Activated CD8-positive, alpha-beta T cell treated with anti-CD3 and anti-CD28 coated beads for 36 hours (primary cell): ENCODE measurements at regions of chr7 and their contacts with region 1.

Region 1: DNA sequence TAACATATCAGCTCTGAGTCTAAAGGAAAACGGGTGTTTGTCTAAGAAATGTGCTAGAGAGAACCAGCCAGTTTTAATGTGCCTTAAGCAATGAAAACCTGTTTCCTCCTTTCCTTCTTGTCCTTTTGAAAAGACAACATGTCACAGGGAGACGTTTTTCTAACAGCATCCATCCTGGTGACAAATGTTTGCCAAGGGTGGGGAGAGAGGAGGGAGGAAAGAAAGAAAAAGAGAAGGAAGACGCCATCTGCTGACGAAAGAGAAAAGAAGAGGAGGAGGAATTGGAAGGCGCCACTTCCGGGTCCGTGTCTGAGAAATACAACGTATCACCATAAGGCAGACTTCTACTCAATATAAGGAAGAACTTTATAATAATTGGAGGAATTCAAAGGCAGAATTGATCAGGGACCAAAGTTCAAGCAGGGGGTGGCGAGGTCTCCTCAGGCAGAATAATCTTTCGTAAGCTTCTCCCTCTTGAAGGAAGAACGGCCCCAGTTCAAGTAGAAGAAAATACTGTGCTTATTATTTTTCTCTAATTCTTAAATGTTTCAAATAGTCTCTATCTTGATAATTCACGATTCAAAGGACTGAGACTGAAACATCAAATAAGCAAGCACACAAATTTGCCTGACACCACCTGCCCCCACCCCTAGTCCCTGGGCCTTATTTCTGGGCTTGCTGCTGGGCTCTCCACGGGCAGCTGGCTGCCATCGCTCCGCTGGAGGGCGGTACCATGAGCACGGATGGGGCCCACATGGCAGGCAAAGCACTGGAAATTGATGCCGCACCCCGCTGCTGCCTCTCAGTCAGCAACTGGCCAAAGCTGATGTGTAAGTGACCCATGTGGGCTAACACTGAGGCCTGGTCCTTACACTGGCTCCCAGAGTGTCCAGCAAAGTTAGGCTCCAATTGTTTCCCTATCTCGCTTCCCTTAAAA is 273.7 kb upstream of the KLF14 start:
- DNase-seq: peak; percentile 79
- ATAC-seq: peak; percentile 24
- H3K4me3 Mint-ChIP-seq: peak overlapping the region; percentile 59
- H3K27ac Mint-ChIP-seq: peak overlapping the region; percentile 99
- H3K4me1 Mint-ChIP-seq: peaks cover 82% of the 10 kb centered on the region
- H3K27me3 Mint-ChIP-seq: no peaks in the 10 kb centered on the region
- CTCF ChIP-seq: peak; percentile 59

Region 2: GRCh38 chr7:130951303-130951975 is 56.2 kb before region 1 on chr7:
- CTCF ChIA-PET with region 1: interaction called, 5 read pairs
- POLR2A ChIA-PET with region 1: interaction called, 118 read pairs
- intact Hi-C with region 1: no loop called
- DNase-seq: no peak
- ATAC-seq: peak; percentile 9
- H3K4me3 Mint-ChIP-seq: no peak overlapping the region
- H3K27ac Mint-ChIP-seq: no peak overlapping the region
- H3K4me1 Mint-ChIP-seq: peaks cover 61% of the 10 kb centered on the region
- H3K27me3 Mint-ChIP-seq: no peaks in the 10 kb centered on the region
- CTCF ChIP-seq: no peak

Region 3: DNA sequence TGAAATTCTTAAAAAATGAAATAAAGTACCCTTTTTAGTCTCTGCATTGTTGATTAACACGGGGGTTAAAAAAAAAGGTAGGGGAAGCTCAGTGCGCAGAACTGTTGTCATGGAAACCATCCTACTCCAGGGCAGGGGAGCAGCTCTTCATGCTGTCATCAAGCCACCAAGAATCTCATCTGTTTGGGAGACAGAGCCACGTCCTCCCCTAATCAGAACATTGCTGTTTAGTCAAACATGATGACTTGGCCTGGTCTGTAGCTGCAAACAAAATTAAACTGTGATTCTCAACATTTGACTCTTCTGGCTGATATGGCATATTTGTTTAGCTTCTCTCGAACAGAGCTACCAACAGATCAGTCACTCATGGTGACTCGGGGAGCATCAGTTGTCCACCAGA is 19.2 kb before region 1 on chr7:
- CTCF ChIA-PET with region 1: interaction called, 69 read pairs
- POLR2A ChIA-PET with region 1: interaction called, 4 read pairs
- intact Hi-C with region 1: no loop called
- DNase-seq: no peak
- ATAC-seq: peak; percentile 60
- H3K4me3 Mint-ChIP-seq: no peak overlapping the region
- H3K27ac Mint-ChIP-seq: peak overlapping the region; percentile 68
- H3K4me1 Mint-ChIP-seq: peaks cover 75% of the 10 kb centered on the region
- H3K27me3 Mint-ChIP-seq: no peaks in the 10 kb centered on the region
- CTCF ChIP-seq: no peak

Region 4: GRCh38 chr7:131021460-131021859 is 13.8 kb after region 1 on chr7:
- CTCF ChIA-PET with region 1: interaction called, 13 read pairs
- POLR2A ChIA-PET with region 1: interaction called, 10 read pairs
- intact Hi-C with region 1: no loop called
- DNase-seq: no peak
- ATAC-seq: peak; percentile 54
- H3K4me3 Mint-ChIP-seq: peak overlapping the region; percentile 22
- H3K27ac Mint-ChIP-seq: peak overlapping the region; percentile 88
- H3K4me1 Mint-ChIP-seq: peaks cover 77% of the 10 kb centered on the region
- H3K27me3 Mint-ChIP-seq: no peaks in the 10 kb centered on the region
- CTCF ChIP-seq: no peak

Region 5: GRCh38 chr7:131032786-131033185 is 25.1 kb after region 1 on chr7:
- CTCF ChIA-PET with region 1: interaction called, 10 read pairs
- POLR2A ChIA-PET with region 1: interaction called, 12 read pairs
- intact Hi-C with region 1: loop called (anchors 2 kb)
- DNase-seq: no peak
- ATAC-seq: no peak
- H3K4me3 Mint-ChIP-seq: no peak overlapping the region
- H3K27ac Mint-ChIP-seq: peak overlapping the region; percentile 99
- H3K4me1 Mint-ChIP-seq: peaks cover 84% of the 10 kb centered on the region
- H3K27me3 Mint-ChIP-seq: no peaks in the 10 kb centered on the region
- CTCF ChIP-seq: no peak

Region 6: DNA sequence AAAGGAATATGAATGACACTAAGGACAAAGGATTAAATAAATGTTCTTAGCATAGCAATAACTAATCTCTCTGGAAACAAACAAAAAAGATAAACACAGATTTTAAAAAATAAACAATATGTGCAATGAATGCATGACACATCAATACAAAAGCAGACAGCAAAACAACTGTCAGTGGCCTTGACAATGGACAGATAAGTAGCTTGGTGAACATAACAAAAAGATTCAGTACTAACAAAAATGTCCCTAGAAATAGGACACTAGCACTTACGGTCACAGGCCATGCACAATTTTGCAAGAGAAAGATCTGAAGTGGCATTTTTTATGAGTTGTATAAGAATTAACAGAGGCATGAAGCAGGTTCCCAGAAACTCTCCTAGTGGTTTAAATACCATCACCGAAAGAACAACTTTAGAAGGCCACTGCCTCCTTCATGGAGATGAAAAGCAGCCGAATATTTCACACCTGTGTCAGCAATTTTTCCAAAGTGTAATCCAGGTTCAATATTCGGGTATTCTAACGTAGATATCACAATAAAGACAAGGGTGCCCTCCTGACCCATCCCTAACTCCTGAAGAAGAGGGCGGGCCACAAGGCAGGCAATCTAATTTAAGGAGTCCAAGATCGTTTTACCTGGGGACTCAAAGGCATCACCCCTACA is 88.7 kb after region 1 on chr7:
- CTCF ChIA-PET with region 1: no interaction called
- POLR2A ChIA-PET with region 1: no interaction called
- intact Hi-C with region 1: no loop called
- DNase-seq: no peak
- ATAC-seq: no peak
- H3K4me3 Mint-ChIP-seq: no peak overlapping the region
- H3K27ac Mint-ChIP-seq: peak overlapping the region; percentile 32
- H3K4me1 Mint-ChIP-seq: peaks cover 68% of the 10 kb centered on the region
- H3K27me3 Mint-ChIP-seq: no peaks in the 10 kb centered on the region
- CTCF ChIP-seq: no peak

Region 7: GRCh38 chr7:131219312-131220041 is 211.8 kb after region 1 on chr7:
- CTCF ChIA-PET with region 1: no interaction called
- POLR2A ChIA-PET with region 1: no interaction called
- intact Hi-C with region 1: no loop called
- DNase-seq: no peak
- ATAC-seq: no peak
- H3K4me3 Mint-ChIP-seq: no peak overlapping the region
- H3K27ac Mint-ChIP-seq: no peak overlapping the region
- H3K4me1 Mint-ChIP-seq: peaks cover 12% of the 10 kb centered on the region
- H3K27me3 Mint-ChIP-seq: no peaks in the 10 kb centered on the region
- CTCF ChIP-seq: no peak